ENCODE measurements at regions of chr12 and their contacts with region 1.

Region 1: GRCh38 chr12:47837190-47838171 is 17.8 kb upstream of the HDAC7 start:
- DNase-seq: peak; percentile 80
- ATAC-seq: no peak
- H3K4me3 Mint-ChIP-seq: peak overlapping the region; percentile 3
- H3K27ac Mint-ChIP-seq: peak overlapping the region; percentile 49
- H3K4me1 Mint-ChIP-seq: peaks cover 65% of the 10 kb centered on the region
- H3K27me3 Mint-ChIP-seq: no peaks in the 10 kb centered on the region

Region 2: GRCh38 chr12:47742253-47742825 is 95.1 kb before region 1 on chr12:
- CTCF ChIA-PET with region 1: interaction called, 198 read pairs
- POLR2A ChIA-PET with region 1: no interaction called
- intact Hi-C with region 1: loop called (anchors 1 kb)
- DNase-seq: peak; percentile 88
- ATAC-seq: peak; percentile 59
- H3K4me3 Mint-ChIP-seq: no peak overlapping the region
- H3K27ac Mint-ChIP-seq: no peak overlapping the region
- H3K4me1 Mint-ChIP-seq: peaks cover 17% of the 10 kb centered on the region
- H3K27me3 Mint-ChIP-seq: peaks cover 2% of the 10 kb centered on the region

Region 3: GRCh38 chr12:47779301-47779942 is 58.1 kb before region 1 on chr12:
- CTCF ChIA-PET with region 1: interaction called, 90 read pairs
- POLR2A ChIA-PET with region 1: interaction called, 3 read pairs
- intact Hi-C with region 1: loop called (anchors 1 kb)
- DNase-seq: peak; percentile 96
- ATAC-seq: peak; percentile 82
- H3K4me3 Mint-ChIP-seq: no peak overlapping the region
- H3K27ac Mint-ChIP-seq: peak overlapping the region; percentile 37
- H3K4me1 Mint-ChIP-seq: peaks cover 29% of the 10 kb centered on the region
- H3K27me3 Mint-ChIP-seq: no peaks in the 10 kb centered on the region

Region 4: GRCh38 chr12:47803191-47803875 is 34.1 kb before region 1 on chr12:
- CTCF ChIA-PET with region 1: interaction called, 303 read pairs
- POLR2A ChIA-PET with region 1: interaction called, 215 read pairs
- intact Hi-C with region 1: loop called (anchors 1 kb)
- DNase-seq: no peak
- ATAC-seq: peak; percentile 16
- H3K4me3 Mint-ChIP-seq: peak overlapping the region; percentile 29
- H3K27ac Mint-ChIP-seq: peak overlapping the region; percentile 94
- H3K4me1 Mint-ChIP-seq: peaks cover 91% of the 10 kb centered on the region
- H3K27me3 Mint-ChIP-seq: no peaks in the 10 kb centered on the region

Region 5: GRCh38 chr12:47850153-47851084 is 12.9 kb after region 1 on chr12:
- CTCF ChIA-PET with region 1: interaction called, 19 read pairs
- POLR2A ChIA-PET with region 1: no interaction called
- intact Hi-C with region 1: no loop called
- DNase-seq: no peak
- ATAC-seq: no peak
- H3K4me3 Mint-ChIP-seq: no peak overlapping the region
- H3K27ac Mint-ChIP-seq: no peak overlapping the region
- H3K4me1 Mint-ChIP-seq: peaks cover 16% of the 10 kb centered on the region
- H3K27me3 Mint-ChIP-seq: no peaks in the 10 kb centered on the region

Region 6: DNA sequence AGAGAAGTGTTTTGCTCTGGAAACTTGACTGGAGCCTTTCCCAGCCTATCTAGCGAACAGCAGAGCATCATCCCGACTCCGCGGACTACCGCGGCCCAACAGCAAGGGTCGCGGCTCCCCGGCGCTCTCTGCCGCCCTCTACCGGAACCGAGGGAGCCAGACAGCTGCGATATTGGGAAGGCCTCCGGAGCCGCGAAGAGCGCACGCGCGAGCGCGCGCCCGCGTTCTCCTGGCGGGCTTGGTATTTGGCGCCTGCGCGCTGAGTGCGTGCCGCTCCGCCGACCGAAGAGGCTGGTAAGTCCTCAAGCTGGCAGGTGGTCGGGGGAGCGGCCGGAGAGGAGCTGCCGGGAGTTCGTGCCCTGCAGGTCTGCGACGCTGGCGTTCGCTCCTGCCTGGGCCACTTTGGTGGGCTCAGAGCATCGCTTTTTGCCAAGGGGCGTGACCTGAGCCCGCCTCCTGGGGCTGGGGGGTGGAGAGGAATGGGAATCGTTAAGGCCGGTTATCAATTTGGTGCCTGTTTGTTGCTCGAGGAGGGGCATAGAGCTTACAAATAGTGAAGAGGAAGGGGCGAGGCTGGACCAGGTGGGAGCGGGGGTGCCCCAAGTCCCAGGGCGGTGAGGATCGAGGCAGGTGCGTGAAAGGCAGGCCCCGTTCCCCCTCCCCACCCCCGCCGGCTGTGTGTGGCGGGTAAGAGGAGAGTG is 126.0 kb after region 1 on chr12 and contains the start of gene TMEM106C:
- CTCF ChIA-PET with region 1: interaction called, 10 read pairs
- POLR2A ChIA-PET with region 1: no interaction called
- intact Hi-C with region 1: loop called in 1 of 2 experiments (anchors 1 kb)
- DNase-seq: peak; percentile 96
- ATAC-seq: peak; percentile 98
- H3K4me3 Mint-ChIP-seq: peak within 1 kb of the TSS; percentile 99
- H3K27ac Mint-ChIP-seq: peak within 1 kb of the TSS; percentile 87
- H3K4me1 Mint-ChIP-seq: peaks cover 34% of the 10 kb centered on the region
- H3K27me3 Mint-ChIP-seq: peaks cover 2% of the 10 kb centered on the region
- total RNA-seq, gene TMEM106C: 159 to 248 TPM